T-cell (primary cell): ENCODE measurements at regions of chrX and their contacts with region 1.

Region 1: GRCh38 chrX:118495061-118495921 is at the start of gene DOCK11:
- DNase-seq: peak; percentile 56 to 84 (median 74)
- ATAC-seq: peak; percentile 71 to 76 (median 73)
- H3K4me3 ChIP-seq: peak within 1 kb of the TSS; percentile 66 to 80
- H3K4me3 Mint-ChIP-seq: peak within 1 kb of the TSS; percentile 95 to 98 (median 95)
- H3K27ac ChIP-seq: peak within 1 kb of the TSS; percentile 77
- H3K27ac Mint-ChIP-seq: peak within 1 kb of the TSS; percentile 96 to 98
- H3K4me1 ChIP-seq: peaks cover 10 to 29% of the 10 kb centered on the region in 2 experiments
- H3K4me1 Mint-ChIP-seq: peaks cover 17 to 28% (median 25%) of the 10 kb centered on the region in 3 donors
- H3K27me3 ChIP-seq: no peaks in the 10 kb centered on the region
- H3K27me3 Mint-ChIP-seq: peaks cover 0 to 9% of the 10 kb centered on the region in 2 donors
- total RNA-seq, gene DOCK11: 90.7 to 102 (median 94.5) TPM

Region 2: GRCh38 chrX:118459494-118459893 is 35.8 kb before region 1 on chrX:
- CTCF ChIA-PET with region 1: interaction called in 1 of 2 experiments, 10 read pairs
- POLR2A ChIA-PET with region 1: interaction called in 1 of 2 experiments, 6 read pairs
- DNase-seq: peak in 23 of 35 experiments; percentile 0 to 58 (median 6)
- ATAC-seq: peak in 3 of 4 experiments; percentile 37 to 53 (median 53)
- H3K4me3 ChIP-seq: no peak overlapping the region
- H3K4me3 Mint-ChIP-seq: no peak overlapping the region
- H3K27ac ChIP-seq: no peak overlapping the region
- H3K27ac Mint-ChIP-seq: no peak overlapping the region
- H3K4me1 ChIP-seq: no peaks in the 10 kb centered on the region
- H3K4me1 Mint-ChIP-seq: peaks cover 0 to 4% (median 0%) of the 10 kb centered on the region in 3 donors
- H3K27me3 ChIP-seq: no peaks in the 10 kb centered on the region
- H3K27me3 Mint-ChIP-seq: peaks cover 0 to 8% of the 10 kb centered on the region in 2 donors

Region 3: GRCh38 chrX:118536687-118537461 is 41.6 kb after region 1 on chrX:
- CTCF ChIA-PET with region 1: interaction called in 1 of 2 experiments, 17 read pairs
- POLR2A ChIA-PET with region 1: interaction called, 4 read pairs
- DNase-seq: peak in 33 of 35 experiments; percentile 14 to 73 (median 40)
- ATAC-seq: peak; percentile 81 to 84 (median 83)
- H3K4me3 ChIP-seq: no peak overlapping the region
- H3K4me3 Mint-ChIP-seq: peak overlapping the region; percentile 43 to 56 (median 49)
- H3K27ac ChIP-seq: peak overlapping the region; percentile 61
- H3K27ac Mint-ChIP-seq: peak overlapping the region; percentile 73 to 78
- H3K4me1 ChIP-seq: peaks cover 2 to 23% of the 10 kb centered on the region in 2 experiments
- H3K4me1 Mint-ChIP-seq: peaks cover 61 to 81% (median 76%) of the 10 kb centered on the region in 3 donors
- H3K27me3 ChIP-seq: no peaks in the 10 kb centered on the region
- H3K27me3 Mint-ChIP-seq: no peaks in the 10 kb centered on the region

Region 4: DNA sequence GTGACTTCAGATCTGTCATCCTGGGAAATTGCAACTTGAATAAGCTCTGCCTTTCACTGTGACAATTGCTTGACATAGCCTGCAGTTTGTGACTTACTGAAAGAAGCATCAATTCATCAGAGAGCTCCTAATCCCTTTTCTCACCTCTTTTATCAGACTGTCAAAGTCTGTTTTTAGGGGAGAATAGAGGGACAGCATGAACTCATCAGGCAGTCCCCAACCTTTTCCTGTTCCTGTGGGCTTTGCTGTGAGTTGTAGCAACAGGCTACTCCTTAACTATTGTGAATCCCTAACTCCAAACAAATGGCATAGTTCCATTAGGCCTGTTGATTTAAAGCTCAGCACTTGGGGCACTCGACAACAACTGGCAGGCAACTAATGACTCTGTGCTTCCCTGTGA is 65.2 kb after region 1 on chrX:
- CTCF ChIA-PET with region 1: no interaction called
- POLR2A ChIA-PET with region 1: interaction called in 1 of 2 experiments, 17 read pairs
- DNase-seq: no peak
- ATAC-seq: no peak
- H3K4me3 ChIP-seq: no peak overlapping the region
- H3K4me3 Mint-ChIP-seq: no peak overlapping the region
- H3K27ac ChIP-seq: no peak overlapping the region
- H3K27ac Mint-ChIP-seq: peak overlapping the region; percentile 2 to 46
- H3K4me1 ChIP-seq: no peaks in the 10 kb centered on the region
- H3K4me1 Mint-ChIP-seq: peaks cover 6 to 32% (median 13%) of the 10 kb centered on the region in 3 donors
- H3K27me3 ChIP-seq: no peaks in the 10 kb centered on the region
- H3K27me3 Mint-ChIP-seq: peaks cover 0 to 4% of the 10 kb centered on the region in 2 donors

Region 5: DNA sequence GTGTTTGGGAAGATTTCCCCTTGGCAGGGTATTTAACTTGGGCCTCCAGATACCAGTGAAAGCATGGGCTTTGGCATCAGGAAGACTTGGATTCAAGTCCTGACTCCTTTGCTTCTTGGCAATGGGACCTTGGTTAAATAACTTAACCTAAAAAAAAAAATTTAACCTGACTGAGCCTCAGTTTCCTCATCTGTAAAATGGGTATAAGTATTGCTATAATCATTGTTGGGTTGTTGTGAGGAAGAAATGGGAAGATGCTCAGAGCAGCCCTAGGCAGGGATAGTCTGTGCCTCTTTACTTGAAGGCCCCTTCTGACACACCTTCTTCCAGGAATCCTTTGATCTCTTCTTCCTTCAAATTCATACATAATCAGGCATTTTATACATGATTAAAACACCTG is 398.6 kb after region 1 on chrX:
- CTCF ChIA-PET with region 1: no interaction called
- POLR2A ChIA-PET with region 1: no interaction called
- DNase-seq: no peak
- ATAC-seq: no peak
- H3K4me3 ChIP-seq: no peak overlapping the region
- H3K4me3 Mint-ChIP-seq: no peak overlapping the region
- H3K27ac ChIP-seq: no peak overlapping the region
- H3K27ac Mint-ChIP-seq: no peak overlapping the region
- H3K4me1 ChIP-seq: no peaks in the 10 kb centered on the region
- H3K4me1 Mint-ChIP-seq: no peaks in the 10 kb centered on the region
- H3K27me3 ChIP-seq: no peaks in the 10 kb centered on the region
- H3K27me3 Mint-ChIP-seq: peaks cover 0 to 10% of the 10 kb centered on the region in 2 donors